Left cardiac atrium (tissue), 4 donors: ENCODE measurements at regions of chr4 and their contacts with region 1.

Region 1: DNA sequence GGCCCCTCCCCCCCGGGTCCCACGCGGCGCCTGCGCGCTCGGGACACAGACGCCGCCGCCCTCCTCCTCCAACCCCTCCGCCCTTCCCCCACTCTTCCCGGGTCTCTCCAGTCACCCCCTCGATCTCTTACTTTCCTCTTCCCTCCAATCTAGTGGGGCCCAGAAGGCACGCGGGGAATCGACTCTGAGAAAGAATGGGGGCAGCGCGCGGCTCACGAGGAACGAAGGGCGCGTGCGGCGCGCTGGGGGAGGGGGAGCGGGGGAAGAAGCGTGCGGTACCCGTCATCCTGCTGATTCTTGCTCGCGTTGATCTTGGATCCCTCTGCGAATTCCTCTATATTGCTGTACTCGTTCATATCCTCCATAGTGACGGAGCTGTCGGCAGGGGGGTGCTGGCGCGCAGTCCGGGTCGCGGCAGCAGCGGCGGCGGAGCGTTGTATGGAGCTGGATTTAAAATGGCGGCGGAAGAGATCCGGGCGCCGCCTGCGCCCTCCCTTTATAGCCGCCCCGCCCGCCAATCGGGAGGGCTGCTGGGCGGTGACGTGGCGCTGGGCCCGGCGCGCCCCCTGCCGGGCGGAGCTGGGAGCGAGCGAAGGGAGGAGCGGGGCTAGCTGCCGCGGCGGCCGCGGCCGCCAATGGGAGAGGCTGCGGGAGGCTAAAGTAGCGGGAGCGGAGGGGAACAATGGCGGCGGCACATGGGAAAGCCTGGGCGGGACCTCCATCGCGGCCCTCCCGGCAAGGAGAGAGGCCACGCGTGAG is 1.1 kb downstream of the HNRNPDL start:
- DNase-seq: peak; percentile 91
- ATAC-seq: peak; percentile 86 to 87

Region 2: GRCh38 chr4:82138374-82138773 is 290.8 kb before region 1 on chr4:
- intact Hi-C with region 1: no loop called
- DNase-seq: no peak
- ATAC-seq: no peak

Region 3: DNA sequence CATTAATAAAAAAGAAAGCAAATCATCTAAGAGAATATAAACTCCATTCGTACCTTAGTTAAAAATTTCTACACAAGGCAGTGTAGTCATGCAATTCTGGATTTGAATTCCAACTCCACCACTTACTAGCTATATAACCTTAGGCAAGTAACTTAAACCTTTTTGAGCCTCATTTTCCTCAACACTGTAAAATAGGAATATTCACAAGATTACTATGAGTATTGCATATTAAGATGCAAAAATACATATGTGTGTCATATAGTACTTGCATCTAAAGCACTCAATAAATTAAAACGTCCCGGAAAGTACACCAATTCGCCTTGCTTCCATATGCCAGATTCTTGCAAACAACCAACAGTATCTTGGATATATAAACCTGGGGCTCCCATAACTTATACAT is 97.3 kb before region 1 on chr4:
- intact Hi-C with region 1: no loop called
- DNase-seq: no peak
- ATAC-seq: no peak

Region 4: DNA sequence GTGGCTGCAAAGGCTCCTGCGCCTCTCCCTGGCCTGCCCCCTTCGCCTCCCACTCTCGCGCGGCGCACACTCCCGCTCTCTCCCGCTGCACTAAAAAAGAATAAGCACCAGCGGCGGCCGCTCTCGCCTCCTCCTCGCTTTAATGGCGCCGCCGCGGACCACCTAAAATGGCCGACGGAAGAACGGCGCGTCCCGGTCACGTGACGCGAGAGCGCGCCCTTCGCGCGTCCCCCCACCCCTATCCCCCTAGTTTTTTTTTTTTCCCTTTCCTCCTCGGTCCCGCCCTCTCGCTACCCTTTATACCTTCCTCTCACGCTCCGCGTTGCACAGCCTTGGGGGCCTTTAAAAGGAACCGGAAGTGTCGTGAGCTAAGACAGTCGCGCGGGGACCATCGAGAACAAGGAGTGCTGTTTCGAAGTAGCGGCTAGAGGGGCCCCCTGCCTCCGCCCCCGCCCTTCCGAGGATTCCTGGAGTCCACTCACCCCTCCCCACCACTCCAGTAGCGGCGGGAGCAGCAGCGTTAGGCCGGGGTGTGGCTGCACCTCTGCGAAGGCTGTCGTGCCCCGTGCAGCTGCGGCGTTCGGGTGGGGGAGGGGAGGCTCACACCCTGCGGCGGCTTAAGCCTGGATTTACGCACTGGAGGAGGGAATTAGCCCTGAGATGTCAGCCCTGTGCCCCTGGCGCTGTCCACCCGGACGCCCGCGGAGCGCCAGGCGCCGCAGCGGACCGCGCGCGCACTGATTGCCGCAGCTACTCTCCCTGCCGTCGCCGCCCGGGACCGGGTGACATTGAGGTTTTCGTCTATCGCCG is 55.1 kb before region 1 on chr4 and contains the start of gene HNRNPD:
- intact Hi-C with region 1: loop called in 1 of 2 experiments (anchors 2 kb)
- DNase-seq: peak; percentile 99
- ATAC-seq: peak; percentile 93 to 94
- total RNA-seq, gene HNRNPD: 106 to 147 TPM

Region 5: GRCh38 chr4:82379964-82380733 is 49.0 kb before region 1 on chr4:
- intact Hi-C with region 1: loop called (anchors 2 to 5 kb)
- DNase-seq: peak; percentile 54
- ATAC-seq: peak; percentile 93 to 95